ENCODE measurements at regions of chr16 and their contacts with region 1.

Region 1: DNA sequence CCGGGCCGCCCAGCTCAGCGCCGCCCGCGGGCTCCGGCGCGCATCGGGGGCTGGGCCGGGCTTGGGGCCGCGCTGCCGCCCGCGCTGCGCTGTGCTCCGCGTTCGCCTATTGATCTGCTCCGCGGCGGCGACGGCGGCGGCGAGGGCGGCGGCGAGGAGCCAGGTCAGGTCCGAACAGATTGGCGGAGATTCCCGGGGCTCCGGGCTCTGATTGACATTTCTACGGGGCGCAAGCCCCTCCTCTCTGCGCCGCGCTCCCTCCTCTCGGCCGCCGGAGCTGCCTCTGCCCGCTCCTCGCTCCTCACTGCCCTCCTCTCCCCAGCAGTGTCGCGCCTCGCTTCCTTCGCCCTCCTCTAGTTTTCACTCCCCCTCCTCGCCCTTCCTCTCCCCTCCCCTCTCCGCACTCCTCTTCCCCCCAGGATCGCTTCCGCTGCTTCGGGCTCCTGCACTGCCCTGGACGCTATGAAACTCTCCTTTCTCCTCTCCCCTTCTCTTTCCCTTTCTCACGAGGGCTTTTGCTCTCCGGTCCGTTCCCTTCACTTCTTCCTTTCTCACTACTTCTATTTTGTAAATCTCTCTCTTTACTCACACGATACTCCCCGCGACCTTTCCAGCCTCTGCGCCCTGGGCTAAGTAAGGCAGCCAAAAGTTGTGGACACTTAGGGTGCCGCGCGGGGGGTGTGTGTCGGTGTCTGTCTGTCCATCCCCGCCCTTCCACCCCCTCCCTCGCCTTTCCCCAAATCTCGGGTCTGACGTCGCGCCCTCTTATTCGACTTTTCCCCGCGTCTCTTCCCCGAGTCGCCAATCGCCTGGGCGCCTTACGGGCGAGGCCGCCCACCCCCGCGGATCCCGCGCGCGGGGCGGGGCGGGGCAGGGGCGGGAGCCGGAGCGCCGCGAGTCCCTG is at the start of gene IRX3:
- DNase-seq: peak in 2 of 42 donors; percentile 12 to 26

Region 2: DNA sequence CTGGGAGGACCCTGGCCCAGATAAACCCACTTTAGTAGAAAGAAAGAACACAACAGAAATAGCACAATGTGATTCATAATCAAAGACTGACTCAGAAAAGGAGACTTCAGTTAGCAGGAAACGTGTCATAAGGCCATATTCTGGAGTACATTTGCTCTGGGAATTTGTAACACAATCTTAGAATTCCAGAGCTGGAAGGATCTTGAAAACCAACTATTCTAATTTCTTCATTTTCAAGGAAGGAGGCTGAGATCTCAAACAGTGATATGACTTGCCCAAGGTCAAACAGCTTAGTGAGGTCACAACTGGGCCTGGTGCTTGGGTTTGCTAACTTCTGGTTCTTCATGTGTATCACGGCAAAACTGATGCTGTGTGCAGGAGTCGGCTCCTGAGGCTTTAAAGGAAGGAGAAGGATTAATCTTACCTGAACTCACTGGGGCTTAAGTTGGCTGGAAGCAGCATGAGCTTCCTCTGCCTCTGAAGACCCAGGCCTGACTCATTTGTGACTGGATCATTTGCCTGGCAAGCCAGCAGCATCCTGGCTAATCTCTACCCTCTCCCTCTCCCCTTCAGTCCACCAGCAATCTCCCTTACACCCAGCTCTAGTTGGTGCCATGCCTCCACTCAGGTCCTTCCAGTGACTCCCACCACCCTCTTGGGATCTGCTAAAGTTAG is 150.3 kb before region 1 on chr16:
- intact Hi-C with region 1: no loop called
- DNase-seq: no peak

Region 3: GRCh38 chr16:54929090-54930004 is 643.0 kb after region 1 on chr16:
- intact Hi-C with region 1: loop called (anchors 5 kb)
- DNase-seq: peak; percentile 97 to 100 (median 99)

Measured in head of caudate nucleus (tissue), 42 donors.